B cell (primary cell): ENCODE measurements at regions of chr17 and their contacts with region 1.

Region 1: GRCh38 chr17:28889996-28890395 is 7.5 kb downstream of the FLOT2 start:
- DNase-seq: no peak
- ATAC-seq: no peak
- H3K4me3 ChIP-seq: no peak overlapping the region
- H3K4me3 Mint-ChIP-seq: peak overlapping the region; percentile 45
- H3K27ac ChIP-seq: no peak overlapping the region
- H3K27ac Mint-ChIP-seq: peak overlapping the region; percentile 75
- H3K4me1 ChIP-seq: peaks cover 54 to 71% of the 10 kb centered on the region in 2 donors
- H3K4me1 Mint-ChIP-seq: peaks cover 75% of the 10 kb centered on the region
- H3K27me3 ChIP-seq: no peaks in the 10 kb centered on the region
- H3K27me3 Mint-ChIP-seq: no peaks in the 10 kb centered on the region
- CTCF ChIP-seq: no peak

Region 2: GRCh38 chr17:28871056-28871579 is 18.9 kb before region 1 on chr17:
- CTCF ChIA-PET with region 1: interaction called, 12 read pairs
- POLR2A ChIA-PET with region 1: interaction called, 14 read pairs
- intact Hi-C with region 1: loop called (anchors 2 kb)
- DNase-seq: peak; percentile 68
- ATAC-seq: peak; percentile 99
- H3K4me3 ChIP-seq: no peak overlapping the region
- H3K4me3 Mint-ChIP-seq: peak overlapping the region; percentile 68
- H3K27ac ChIP-seq: peak overlapping the region; percentile 65 to 90
- H3K27ac Mint-ChIP-seq: peak overlapping the region; percentile 97
- H3K4me1 ChIP-seq: peaks cover 13 to 23% of the 10 kb centered on the region in 2 donors
- H3K4me1 Mint-ChIP-seq: peaks cover 23% of the 10 kb centered on the region
- H3K27me3 ChIP-seq: no peaks in the 10 kb centered on the region
- H3K27me3 Mint-ChIP-seq: no peaks in the 10 kb centered on the region
- CTCF ChIP-seq: no peak